ENCODE measurements at regions of chrX and their contacts with region 1.

Region 1: GRCh38 chrX:107627838-107628661 is at the start of gene PRPS1:
- DNase-seq: peak; percentile 93
- H3K4me3 Mint-ChIP-seq: peak within 1 kb of the TSS; percentile 79
- H3K27ac Mint-ChIP-seq: no peak within 1 kb of the TSS
- H3K4me1 Mint-ChIP-seq: no peaks in the 10 kb centered on the region
- H3K27me3 Mint-ChIP-seq: peaks cover 48% of the 10 kb centered on the region
- CTCF ChIP-seq: no peak
- total RNA-seq, gene PRPS1: 27.9 and 29.7 TPM in 2 replicates

Region 2: DNA sequence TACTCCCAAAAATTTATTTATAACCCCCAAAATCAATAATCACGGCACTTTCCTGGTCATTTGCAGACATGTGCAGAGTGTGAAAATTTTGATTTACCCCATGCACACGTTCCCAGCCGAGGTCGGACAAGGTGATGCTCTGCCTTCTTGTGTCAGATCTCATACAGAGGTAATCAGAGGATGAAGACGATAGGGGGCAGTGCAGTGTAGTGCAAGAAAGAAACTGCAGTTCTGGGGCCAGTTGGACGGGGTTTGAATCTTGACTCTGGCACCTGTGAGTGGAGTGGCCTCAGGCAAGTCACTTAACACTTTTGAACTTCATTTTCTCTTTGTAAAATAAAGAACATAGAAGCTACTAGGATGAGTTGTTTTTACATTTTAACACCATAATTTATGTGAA is 90.2 kb before region 1 on chrX:
- CTCF ChIA-PET with region 1: interaction called, 5 read pairs
- POLR2A ChIA-PET with region 1: no interaction called
- intact Hi-C with region 1: loop called (anchors 5 kb)
- DNase-seq: peak; percentile 64
- H3K4me3 Mint-ChIP-seq: no peak overlapping the region
- H3K27ac Mint-ChIP-seq: no peak overlapping the region
- H3K4me1 Mint-ChIP-seq: no peaks in the 10 kb centered on the region
- H3K27me3 Mint-ChIP-seq: peaks cover 65% of the 10 kb centered on the region
- CTCF ChIP-seq: peak; percentile 50

Region 3: DNA sequence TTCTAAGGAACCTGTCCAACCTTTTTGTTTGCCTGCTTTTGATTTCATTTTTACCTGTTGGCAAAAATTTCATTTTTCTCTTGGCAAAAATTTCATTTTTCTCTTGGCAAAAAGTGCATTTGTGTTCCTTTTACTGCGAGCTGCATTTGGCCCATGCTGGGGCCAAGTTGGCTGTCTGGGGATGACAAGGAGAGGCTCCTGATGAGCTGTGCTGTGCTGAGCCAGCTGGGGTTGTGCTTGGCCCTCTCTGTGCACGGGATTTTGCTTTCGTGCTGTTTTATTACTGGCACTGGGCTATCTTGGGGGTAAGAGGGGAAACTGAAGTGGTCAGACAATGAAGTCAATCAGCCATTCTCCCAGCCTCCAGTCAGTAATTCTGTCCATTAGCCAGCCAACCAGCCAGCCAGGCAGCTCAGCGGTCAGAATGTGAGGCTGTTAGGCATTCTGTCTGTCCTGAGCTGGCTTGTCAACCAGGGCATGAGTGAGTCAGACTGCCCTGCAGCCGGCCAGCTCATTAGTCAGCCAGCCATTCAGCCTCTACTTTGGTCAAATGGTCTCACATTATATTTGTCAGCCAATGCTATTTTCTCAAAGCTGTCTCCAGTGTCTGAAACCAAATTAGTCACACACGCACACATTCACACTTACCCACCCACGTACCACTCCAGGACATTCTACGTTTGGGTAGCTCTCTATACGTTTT is 56.6 kb before region 1 on chrX:
- CTCF ChIA-PET with region 1: interaction called, 6 read pairs
- POLR2A ChIA-PET with region 1: interaction called, 19 read pairs
- intact Hi-C with region 1: no loop called
- DNase-seq: peak; percentile 83
- H3K4me3 Mint-ChIP-seq: no peak overlapping the region
- H3K27ac Mint-ChIP-seq: no peak overlapping the region
- H3K4me1 Mint-ChIP-seq: peaks cover 12% of the 10 kb centered on the region
- H3K27me3 Mint-ChIP-seq: peaks cover 34% of the 10 kb centered on the region
- CTCF ChIP-seq: no peak

Measured in MCF 10A (cell line).